ENCODE measurements at regions of chr2 and their contacts with region 1.

Region 1: GRCh38 chr2:207625018-207625907 is at the start of gene METTL21A:
- DNase-seq: peak; percentile 94
- H3K4me3 Mint-ChIP-seq: peak within 1 kb of the TSS; percentile 86
- H3K27ac Mint-ChIP-seq: peak within 1 kb of the TSS; percentile 64
- H3K4me1 Mint-ChIP-seq: peaks cover 16% of the 10 kb centered on the region
- H3K27me3 Mint-ChIP-seq: no peaks in the 10 kb centered on the region
- CTCF ChIP-seq: peak; percentile 44
- total RNA-seq, gene METTL21A: 27.6 TPM in 2 replicates

Region 2: DNA sequence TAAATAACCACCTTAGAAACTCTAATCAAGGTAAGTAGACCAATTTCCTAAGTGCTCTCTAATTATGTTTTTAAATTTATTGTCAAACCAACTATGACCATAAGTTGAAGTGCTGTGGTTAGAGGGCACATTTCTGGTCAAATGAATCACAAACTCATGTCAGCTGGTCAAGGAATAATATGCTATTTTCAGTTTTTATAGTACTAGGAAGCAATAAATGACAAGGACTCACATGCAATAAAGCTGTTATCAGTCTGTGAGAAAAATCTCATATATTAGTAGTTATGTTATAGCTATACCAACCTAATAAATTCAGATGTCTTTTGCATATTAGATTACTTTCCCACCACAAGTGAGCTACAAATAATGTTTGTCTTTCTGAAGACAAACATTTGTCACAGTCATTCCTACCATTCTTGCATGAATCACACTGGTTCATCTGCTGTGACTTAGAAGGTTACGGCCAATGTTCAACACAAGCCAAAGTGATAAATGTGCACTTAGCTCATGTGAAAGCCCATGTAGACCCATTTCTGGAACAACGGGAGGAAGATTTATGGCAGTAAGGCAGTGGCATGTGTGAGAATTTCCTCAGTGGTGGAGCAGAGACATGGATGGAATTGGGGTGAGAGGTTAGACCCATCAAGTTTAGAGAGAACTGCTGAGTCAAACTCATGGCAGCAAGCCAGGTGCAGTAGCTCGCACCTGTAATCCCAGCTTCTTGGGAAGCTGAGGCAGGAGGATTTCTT is 58.8 kb after region 1 on chr2:
- CTCF ChIA-PET with region 1: interaction called, 4 read pairs
- intact Hi-C with region 1: loop called (anchors 2 kb)
- DNase-seq: peak; percentile 24
- H3K4me3 Mint-ChIP-seq: peak overlapping the region; percentile 42
- H3K27ac Mint-ChIP-seq: peak overlapping the region; percentile 84
- H3K4me1 Mint-ChIP-seq: peaks cover 19% of the 10 kb centered on the region
- H3K27me3 Mint-ChIP-seq: peaks cover 7% of the 10 kb centered on the region
- CTCF ChIP-seq: no peak

Region 3: GRCh38 chr2:207710814-207711740 is 85.8 kb after region 1 on chr2 and contains the start of gene CCNYL1:
- CTCF ChIA-PET with region 1: interaction called, 16 read pairs
- intact Hi-C with region 1: loop called (anchors 2 kb)
- DNase-seq: peak; percentile 99
- H3K4me3 Mint-ChIP-seq: peak within 1 kb of the TSS; percentile 93
- H3K27ac Mint-ChIP-seq: peak within 1 kb of the TSS; percentile 98
- H3K4me1 Mint-ChIP-seq: peaks cover 15% of the 10 kb centered on the region
- H3K27me3 Mint-ChIP-seq: no peaks in the 10 kb centered on the region
- CTCF ChIP-seq: no peak
- total RNA-seq, gene CCNYL1: 13.7 and 16.3 TPM in 2 replicates

Region 4: DNA sequence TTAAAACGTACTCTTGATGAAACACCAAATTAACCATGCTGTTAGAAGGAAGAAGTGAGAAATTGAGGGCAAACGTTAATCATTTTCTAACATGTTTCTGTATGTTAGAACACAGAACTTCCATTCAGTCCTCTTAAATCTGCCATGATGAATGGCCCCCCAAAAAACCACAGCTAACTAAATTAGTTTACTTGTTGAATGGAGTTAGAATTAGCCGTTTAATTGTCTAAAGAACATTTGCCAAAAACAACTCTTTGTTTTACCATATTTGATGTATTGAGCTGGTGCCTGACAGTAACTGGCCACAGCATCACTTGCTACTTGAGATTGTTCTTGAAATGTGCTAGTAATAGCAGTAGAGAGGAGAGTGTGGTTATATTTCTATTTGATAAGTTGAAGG is 98.8 kb after region 1 on chr2:
- CTCF ChIA-PET with region 1: interaction called, 11 read pairs
- intact Hi-C with region 1: loop called (anchors 2 kb)
- DNase-seq: no peak
- H3K4me3 Mint-ChIP-seq: no peak overlapping the region
- H3K27ac Mint-ChIP-seq: no peak overlapping the region
- H3K4me1 Mint-ChIP-seq: peaks cover 41% of the 10 kb centered on the region
- H3K27me3 Mint-ChIP-seq: no peaks in the 10 kb centered on the region
- CTCF ChIP-seq: no peak

Region 5: DNA sequence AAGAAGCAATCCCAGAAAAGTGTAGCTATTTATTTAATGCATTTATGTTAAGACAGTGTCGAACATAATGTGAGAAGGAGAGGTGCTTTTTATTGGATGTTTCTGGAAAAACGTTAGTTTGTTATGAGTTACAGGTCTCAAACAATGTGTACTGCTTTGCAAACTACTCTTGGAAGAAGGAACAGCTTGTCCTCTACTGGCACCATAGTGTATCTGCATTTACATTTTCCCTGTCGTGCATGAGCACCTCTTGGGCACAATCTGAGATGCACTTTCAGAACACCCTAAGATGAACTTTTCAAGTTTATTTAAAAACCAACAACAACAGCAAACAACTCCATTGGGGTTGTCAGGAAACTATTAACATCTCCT is 109.0 kb after region 1 on chr2:
- CTCF ChIA-PET with region 1: interaction called, 19 read pairs
- intact Hi-C with region 1: loop called (anchors 2 kb)
- DNase-seq: no peak
- H3K4me3 Mint-ChIP-seq: no peak overlapping the region
- H3K27ac Mint-ChIP-seq: no peak overlapping the region
- H3K4me1 Mint-ChIP-seq: no peaks in the 10 kb centered on the region
- H3K27me3 Mint-ChIP-seq: no peaks in the 10 kb centered on the region
- CTCF ChIP-seq: no peak

Region 6: GRCh38 chr2:207854484-207855440 is 229.5 kb after region 1 on chr2:
- CTCF ChIA-PET with region 1: no interaction called
- intact Hi-C with region 1: no loop called
- DNase-seq: no peak
- H3K4me3 Mint-ChIP-seq: no peak overlapping the region
- H3K27ac Mint-ChIP-seq: no peak overlapping the region
- H3K4me1 Mint-ChIP-seq: peaks cover 7% of the 10 kb centered on the region
- H3K27me3 Mint-ChIP-seq: no peaks in the 10 kb centered on the region
- CTCF ChIP-seq: no peak

Region 7: DNA sequence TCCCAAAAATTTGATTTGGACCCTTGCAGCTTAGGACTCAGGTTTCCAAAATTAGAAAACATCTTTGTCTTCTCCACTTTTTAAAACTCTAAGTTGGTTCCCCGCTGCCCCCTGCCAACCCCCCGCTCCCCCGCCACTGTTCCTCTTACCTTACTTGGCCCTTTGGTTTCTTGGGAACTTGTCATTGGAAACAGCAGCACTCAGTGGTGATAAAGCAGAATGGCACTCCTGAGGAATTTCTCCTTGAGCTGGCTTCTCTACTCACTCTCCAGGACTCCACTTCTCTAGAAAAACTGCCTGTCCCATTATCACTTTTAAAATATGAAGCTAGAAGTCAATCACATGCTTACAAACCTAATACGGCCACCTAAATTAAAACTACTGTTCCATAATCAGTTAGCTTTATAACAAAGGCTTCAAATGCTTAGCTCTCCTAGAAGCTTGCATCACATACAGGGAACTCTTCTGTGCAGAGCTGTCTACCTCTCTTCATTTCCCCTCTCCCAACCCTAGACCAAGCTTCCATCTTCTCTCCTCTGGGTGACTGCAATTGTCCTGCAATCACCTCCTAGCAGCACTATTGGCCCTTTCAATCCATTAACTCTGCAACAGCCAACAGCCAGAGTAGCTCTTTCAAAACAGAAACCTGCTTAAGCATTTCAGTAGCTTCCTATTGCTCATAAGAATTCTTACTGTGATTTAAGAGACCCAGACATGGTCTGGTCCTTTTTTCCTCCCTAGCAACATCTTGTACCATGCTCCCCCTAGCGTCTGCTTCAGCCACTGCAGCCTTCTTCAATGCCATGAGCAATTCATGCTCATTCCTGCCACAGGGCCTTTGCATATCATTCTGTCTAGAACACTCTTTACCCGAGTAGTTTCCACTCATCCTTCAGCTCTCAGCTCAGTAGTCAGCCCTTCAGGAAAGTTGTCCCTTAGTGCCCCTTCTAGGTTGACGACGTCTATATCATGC is 415.2 kb after region 1 on chr2:
- CTCF ChIA-PET with region 1: interaction called, 11 read pairs
- intact Hi-C with region 1: loop called (anchors 10 kb)
- DNase-seq: peak; percentile 76
- H3K4me3 Mint-ChIP-seq: no peak overlapping the region
- H3K27ac Mint-ChIP-seq: no peak overlapping the region
- H3K4me1 Mint-ChIP-seq: peaks cover 9% of the 10 kb centered on the region
- H3K27me3 Mint-ChIP-seq: no peaks in the 10 kb centered on the region
- CTCF ChIP-seq: peak; percentile 76

Measured in Calu3 (cell line).